Activated CD4-positive, alpha-beta T cell treated with anti-CD3 and anti-CD28 coated beads for 36 hours (primary cell): ENCODE measurements at regions of chr15 and their contacts with region 1.

Region 1: GRCh38 chr15:59917504-59918157 is 86.5 kb upstream of the FOXB1 start:
- DNase-seq: peak; percentile 87
- ATAC-seq: peak; percentile 61
- H3K4me3 Mint-ChIP-seq: no peak overlapping the region
- H3K27ac Mint-ChIP-seq: peak overlapping the region; percentile 58
- H3K4me1 Mint-ChIP-seq: peaks cover 28% of the 10 kb centered on the region
- H3K27me3 Mint-ChIP-seq: peaks cover 11% of the 10 kb centered on the region

Region 2: GRCh38 chr15:59751552-59752413 is 165.8 kb before region 1 on chr15:
- CTCF ChIA-PET with region 1: interaction called, 10 read pairs
- POLR2A ChIA-PET with region 1: no interaction called
- intact Hi-C with region 1: no loop called
- DNase-seq: no peak
- ATAC-seq: peak; percentile 74
- H3K4me3 Mint-ChIP-seq: no peak overlapping the region
- H3K27ac Mint-ChIP-seq: no peak overlapping the region
- H3K4me1 Mint-ChIP-seq: peaks cover 5% of the 10 kb centered on the region
- H3K27me3 Mint-ChIP-seq: peaks cover 4% of the 10 kb centered on the region

Region 3: GRCh38 chr15:59966262-59966661 is 48.6 kb after region 1 on chr15:
- CTCF ChIA-PET with region 1: interaction called, 3 read pairs
- POLR2A ChIA-PET with region 1: no interaction called
- intact Hi-C with region 1: loop called in 1 of 2 experiments (anchors 1 kb)
- DNase-seq: no peak
- ATAC-seq: peak; percentile 79
- H3K4me3 Mint-ChIP-seq: no peak overlapping the region
- H3K27ac Mint-ChIP-seq: no peak overlapping the region
- H3K4me1 Mint-ChIP-seq: peaks cover 17% of the 10 kb centered on the region
- H3K27me3 Mint-ChIP-seq: peaks cover 2% of the 10 kb centered on the region

Region 4: GRCh38 chr15:60021589-60022378 is 104.2 kb after region 1 on chr15:
- CTCF ChIA-PET with region 1: no interaction called
- POLR2A ChIA-PET with region 1: no interaction called
- intact Hi-C with region 1: no loop called
- DNase-seq: no peak
- ATAC-seq: no peak
- H3K4me3 Mint-ChIP-seq: no peak overlapping the region
- H3K27ac Mint-ChIP-seq: no peak overlapping the region
- H3K4me1 Mint-ChIP-seq: peaks cover 22% of the 10 kb centered on the region
- H3K27me3 Mint-ChIP-seq: peaks cover 8% of the 10 kb centered on the region

Region 5: GRCh38 chr15:60044636-60045270 is 127.1 kb after region 1 on chr15:
- CTCF ChIA-PET with region 1: interaction called, 4 read pairs
- POLR2A ChIA-PET with region 1: no interaction called
- intact Hi-C with region 1: loop called in 1 of 2 experiments (anchors 1 kb)
- DNase-seq: peak; percentile 52
- ATAC-seq: peak; percentile 95
- H3K4me3 Mint-ChIP-seq: peak overlapping the region; percentile 30
- H3K27ac Mint-ChIP-seq: peak overlapping the region; percentile 68
- H3K4me1 Mint-ChIP-seq: peaks cover 18% of the 10 kb centered on the region
- H3K27me3 Mint-ChIP-seq: peaks cover 8% of the 10 kb centered on the region

Region 6: DNA sequence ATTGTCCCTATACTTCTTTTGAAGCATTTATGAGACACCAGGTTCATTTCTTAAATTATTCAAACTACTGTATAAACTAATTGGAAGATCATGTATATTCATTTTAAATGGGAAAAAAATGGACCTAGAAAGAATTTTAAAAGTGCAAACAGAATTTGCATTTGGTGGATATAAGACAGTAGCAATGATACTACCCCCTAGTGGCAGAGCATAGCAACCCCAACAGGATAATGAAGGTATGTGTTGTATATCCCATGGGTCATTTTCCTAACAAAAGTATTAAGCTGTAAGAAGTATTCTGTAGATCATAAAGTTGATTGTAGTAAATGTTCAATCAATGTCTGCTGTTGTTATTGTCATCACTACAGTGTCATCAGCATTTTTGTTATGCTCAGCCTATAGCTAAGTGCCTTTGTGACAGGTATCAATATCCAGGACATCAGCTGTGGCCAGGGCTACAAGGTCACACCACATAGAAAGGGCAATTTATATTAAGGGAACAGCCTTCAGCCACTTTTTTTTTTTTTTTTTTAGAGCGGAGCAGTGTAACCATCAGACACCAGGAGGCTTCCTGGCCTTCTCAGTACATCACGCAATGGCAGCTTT is 262.3 kb after region 1 on chr15:
- CTCF ChIA-PET with region 1: interaction called, 5 read pairs
- POLR2A ChIA-PET with region 1: no interaction called
- intact Hi-C with region 1: loop called (anchors 1 kb)
- DNase-seq: peak; percentile 48
- ATAC-seq: peak; percentile 44
- H3K4me3 Mint-ChIP-seq: no peak overlapping the region
- H3K27ac Mint-ChIP-seq: no peak overlapping the region
- H3K4me1 Mint-ChIP-seq: no peaks in the 10 kb centered on the region
- H3K27me3 Mint-ChIP-seq: peaks cover 24% of the 10 kb centered on the region

Region 7: GRCh38 chr15:60397772-60398445 is 480.3 kb after region 1 on chr15 and contains the start of gene ANXA2:
- CTCF ChIA-PET with region 1: no interaction called
- POLR2A ChIA-PET with region 1: no interaction called
- intact Hi-C with region 1: loop called in 1 of 2 experiments (anchors 1 kb)
- DNase-seq: peak; percentile 91
- ATAC-seq: peak; percentile 74
- H3K4me3 Mint-ChIP-seq: peak within 1 kb of the TSS; percentile 83
- H3K27ac Mint-ChIP-seq: peak within 1 kb of the TSS; percentile 89
- H3K4me1 Mint-ChIP-seq: peaks cover 36% of the 10 kb centered on the region
- H3K27me3 Mint-ChIP-seq: peaks cover 4% of the 10 kb centered on the region
- total RNA-seq, gene ANXA2: 65.9 to 80.2 TPM

Region 8: GRCh38 chr15:60541481-60542299 is 624.1 kb after region 1 on chr15:
- CTCF ChIA-PET with region 1: no interaction called
- POLR2A ChIA-PET with region 1: no interaction called
- intact Hi-C with region 1: no loop called
- DNase-seq: no peak
- ATAC-seq: peak; percentile 19
- H3K4me3 Mint-ChIP-seq: peak overlapping the region; percentile 12
- H3K27ac Mint-ChIP-seq: peak overlapping the region; percentile 12
- H3K4me1 Mint-ChIP-seq: peaks cover 95% of the 10 kb centered on the region
- H3K27me3 Mint-ChIP-seq: no peaks in the 10 kb centered on the region